Keratinocyte (primary cell): ENCODE measurements at regions of chr3 and their contacts with region 1.

Region 1: DNA sequence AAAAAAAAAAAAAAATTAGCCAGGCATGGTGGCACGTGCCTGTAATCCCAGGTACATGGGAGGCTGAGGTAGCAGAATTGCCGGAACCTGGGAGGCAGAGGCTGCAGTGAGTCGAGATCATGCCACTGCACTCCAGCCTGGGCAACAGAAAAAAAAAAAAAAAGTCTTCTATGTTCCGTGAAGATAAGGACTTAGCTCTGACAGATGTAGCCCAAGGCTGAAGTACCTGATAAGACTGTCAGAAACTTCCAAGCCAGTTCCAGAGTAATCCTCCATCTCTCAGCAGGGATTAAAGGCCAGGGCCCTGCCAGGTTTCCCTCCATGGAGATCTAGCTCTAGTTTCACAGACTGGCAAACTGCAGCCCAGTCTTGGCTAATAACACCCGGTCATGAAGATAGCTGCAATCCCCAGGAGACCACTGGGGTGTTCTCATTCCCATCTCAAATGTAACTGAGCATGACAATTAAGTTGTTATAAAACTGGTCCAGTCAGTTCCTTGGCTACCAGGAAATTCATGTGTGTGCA is 8.5 kb downstream of the CDCP1 start:
- DNase-seq: no peak
- H3K4me3 ChIP-seq: peak overlapping the region in 2 of 3 experiments; percentile 34 to 56
- H3K27ac ChIP-seq: peak overlapping the region; percentile 86
- H3K4me1 ChIP-seq: peaks cover 91% of the 10 kb centered on the region
- H3K27me3 ChIP-seq: no peaks in the 10 kb centered on the region
- CTCF ChIP-seq: peak in 2 of 3 experiments; percentile 4 to 42

Region 2: GRCh38 chr3:45218578-45219390 is 81.1 kb after region 1 on chr3:
- dilution Hi-C with region 1: loop called (anchors 5 kb)
- DNase-seq: no peak
- H3K4me3 ChIP-seq: no peak overlapping the region
- H3K27ac ChIP-seq: peak overlapping the region; percentile 24
- H3K4me1 ChIP-seq: peaks cover 26% of the 10 kb centered on the region
- H3K27me3 ChIP-seq: no peaks in the 10 kb centered on the region
- CTCF ChIP-seq: no peak